Gastrocnemius medialis (tissue), 4 donors: ENCODE measurements at regions of chr9 and their contacts with region 1.

Region 1: DNA sequence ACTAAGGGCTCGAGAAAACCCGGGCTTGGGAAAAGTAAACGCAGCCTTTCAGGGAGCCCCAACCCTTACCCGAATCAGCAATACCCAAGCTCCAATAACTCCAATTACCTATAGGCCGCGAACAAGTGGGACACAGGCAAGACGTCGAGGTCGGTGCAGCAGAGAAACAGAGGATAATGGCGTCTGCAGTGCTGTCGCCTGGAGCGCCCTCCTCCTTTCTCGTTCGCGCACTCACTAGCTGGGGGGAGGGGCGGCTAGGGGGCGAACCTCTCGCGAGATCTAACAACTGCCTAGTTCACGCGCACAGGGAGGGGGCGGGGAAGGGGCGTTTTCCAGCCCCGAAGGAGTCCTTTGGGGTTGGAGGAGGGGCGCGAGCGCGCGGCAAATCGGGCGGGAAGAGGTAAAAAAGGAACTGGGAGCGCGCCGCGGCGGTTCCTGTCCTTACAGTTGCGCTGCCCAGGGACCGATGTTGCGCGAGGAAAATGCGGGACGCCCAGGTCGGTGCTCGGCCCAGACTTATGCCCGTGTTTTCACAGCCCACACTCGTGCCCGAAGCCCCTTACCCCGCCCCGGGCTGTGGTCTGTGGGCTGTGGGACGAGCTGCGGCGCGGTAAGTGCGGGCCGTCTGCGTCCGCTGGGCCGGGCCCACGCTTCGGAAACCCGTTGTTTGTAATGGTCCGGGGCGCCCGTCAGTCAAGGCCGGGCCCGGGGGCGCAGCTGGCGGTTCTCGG is at the start of gene RMI1:
- DNase-seq: peak; percentile 99
- ATAC-seq: peak; percentile 87 to 88
- H3K4me3 ChIP-seq: peak within 1 kb of the TSS; percentile 88 to 97 (median 92)
- H3K27ac ChIP-seq: peak within 1 kb of the TSS; percentile 99
- H3K4me1 ChIP-seq: peaks cover 31 to 37% of the 10 kb centered on the region in 2 donors
- H3K27me3 ChIP-seq: no peaks in the 10 kb centered on the region
- CTCF ChIP-seq: peak in 1 of 5 experiments; percentile 38
- POLR2A ChIP-seq: peak; percentile 94 to 98
- total RNA-seq, gene RMI1: 2.8 to 3.9 (median 3.6) TPM

Region 2: DNA sequence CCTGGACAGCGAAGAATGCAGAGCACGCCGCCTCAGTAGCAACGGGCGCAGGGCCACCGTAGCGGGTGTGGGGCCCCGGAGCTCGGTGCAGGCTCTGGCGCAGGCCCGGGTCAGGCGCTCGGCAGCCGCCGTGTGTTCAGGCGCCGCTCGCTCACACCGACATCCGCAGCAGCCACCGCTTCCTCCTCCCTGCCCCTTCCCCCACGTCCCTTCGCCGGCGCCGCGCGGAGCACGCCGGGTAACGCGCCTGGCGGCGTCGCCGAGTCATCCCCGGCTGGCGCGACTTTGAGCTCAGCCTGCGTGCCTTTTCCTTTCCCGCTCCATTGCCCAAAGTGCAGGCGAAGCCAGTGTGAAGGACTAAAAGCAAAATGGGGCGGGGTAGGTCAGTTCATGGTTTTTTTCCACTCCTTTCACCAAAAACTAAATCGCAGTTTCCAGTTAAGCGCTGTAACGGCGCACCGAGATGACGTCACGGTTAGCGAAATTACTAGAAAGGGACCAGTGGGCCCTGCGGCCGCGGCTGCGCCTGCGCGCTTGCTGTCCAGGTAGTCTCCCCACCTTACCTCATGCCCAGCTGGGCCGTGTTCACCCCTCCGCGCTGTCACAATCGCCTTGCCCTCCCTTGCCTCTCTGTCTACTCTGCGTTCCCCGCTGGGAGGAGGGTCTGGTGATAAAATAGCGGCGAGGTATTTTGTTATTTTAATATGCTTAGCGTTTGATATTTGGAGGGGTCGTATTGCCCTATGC is 272.6 kb before region 1 on chr9 and contains the start of gene UBQLN1:
- in situ Hi-C with region 1: no loop called
- intact Hi-C with region 1: loop called (anchors 1 kb)
- DNase-seq: peak; percentile 87 to 94
- ATAC-seq: peak; percentile 82
- H3K4me3 ChIP-seq: peak within 1 kb of the TSS; percentile 70 to 92 (median 82)
- H3K27ac ChIP-seq: peak within 1 kb of the TSS; percentile 96 to 99 (median 98)
- H3K4me1 ChIP-seq: peaks cover 25 to 40% of the 10 kb centered on the region in 2 donors
- H3K27me3 ChIP-seq: no peaks in the 10 kb centered on the region
- CTCF ChIP-seq: no peak
- POLR2A ChIP-seq: peak; percentile 98
- total RNA-seq, gene UBQLN1: 202 to 266 (median 231) TPM

Region 3: GRCh38 chr9:83920927-83921707 is 59.4 kb before region 1 on chr9 and contains the start of gene KIF27:
- in situ Hi-C with region 1: no loop called
- intact Hi-C with region 1: loop called (anchors 1 kb)
- DNase-seq: peak; percentile 96 to 98
- ATAC-seq: peak; percentile 95
- H3K4me3 ChIP-seq: peak within 1 kb of the TSS; percentile 70 to 87 (median 80)
- H3K27ac ChIP-seq: peak within 1 kb of the TSS; percentile 91 to 95 (median 94)
- H3K4me1 ChIP-seq: peaks cover 4 to 10% of the 10 kb centered on the region in 2 donors
- H3K27me3 ChIP-seq: no peaks in the 10 kb centered on the region
- CTCF ChIP-seq: peak; percentile 44 to 62 (median 52)
- POLR2A ChIP-seq: peak; percentile 85 to 88
- total RNA-seq, gene KIF27: 1.7 to 4.1 (median 2.2) TPM

Region 4: GRCh38 chr9:83937911-83938323 is 42.6 kb before region 1 on chr9:
- in situ Hi-C with region 1: no loop called
- intact Hi-C with region 1: no loop called
- DNase-seq: no peak
- ATAC-seq: peak; percentile 45 to 48
- H3K4me3 ChIP-seq: no peak overlapping the region
- H3K27ac ChIP-seq: no peak overlapping the region
- H3K4me1 ChIP-seq: peaks cover 20 to 29% of the 10 kb centered on the region in 2 donors
- H3K27me3 ChIP-seq: no peaks in the 10 kb centered on the region
- CTCF ChIP-seq: peak; percentile 59 to 71 (median 68)
- POLR2A ChIP-seq: no peak

Region 5: DNA sequence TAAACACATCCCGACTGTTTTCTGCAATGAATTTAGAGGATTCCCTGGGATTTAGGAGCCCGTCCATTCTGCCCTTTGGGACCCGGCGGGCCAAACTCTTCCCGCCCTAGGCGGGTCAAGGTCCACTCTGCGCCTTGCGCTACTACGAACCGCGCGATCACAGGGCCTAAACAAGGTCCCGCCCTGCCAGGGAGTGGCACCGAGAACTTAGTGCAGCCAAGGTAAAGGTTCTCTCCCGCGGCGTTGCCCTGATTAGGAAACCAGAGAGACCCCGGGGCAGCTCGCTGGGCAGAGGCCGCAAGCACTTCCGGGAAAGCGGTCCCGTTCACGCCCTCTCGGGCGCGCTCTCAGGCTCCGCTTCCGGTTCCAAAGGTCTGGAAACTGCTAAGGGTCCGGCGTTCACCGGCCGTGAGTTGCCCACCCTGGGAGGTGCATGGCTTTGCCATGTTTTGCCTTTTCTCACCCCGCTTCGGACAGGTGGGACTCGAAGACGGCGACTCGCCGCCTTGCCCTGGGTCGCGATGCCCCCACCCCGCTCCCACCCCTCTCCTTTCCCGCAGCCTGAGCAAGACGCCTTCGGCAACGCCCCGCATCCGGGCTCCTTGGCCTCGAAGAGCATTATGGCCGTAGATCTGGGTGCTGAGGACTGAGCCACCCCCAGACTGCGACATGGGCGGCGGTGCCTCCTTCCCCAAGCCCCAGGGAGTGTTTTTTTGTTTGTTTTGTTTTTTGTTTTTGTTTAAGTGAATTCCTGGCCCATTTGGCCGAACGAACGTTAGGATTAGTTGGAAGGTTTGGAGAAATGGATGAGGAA is 23.9 kb before region 1 on chr9:
- in situ Hi-C with region 1: no loop called
- intact Hi-C with region 1: loop called (anchors 1 kb)
- DNase-seq: peak; percentile 64 to 69
- ATAC-seq: peak; percentile 86 to 89
- H3K4me3 ChIP-seq: peak overlapping the region; percentile 78 to 96 (median 84)
- H3K27ac ChIP-seq: peak overlapping the region; percentile 78 to 92 (median 88)
- H3K4me1 ChIP-seq: peaks cover 11 to 17% of the 10 kb centered on the region in 2 donors
- H3K27me3 ChIP-seq: no peaks in the 10 kb centered on the region
- CTCF ChIP-seq: no peak
- POLR2A ChIP-seq: peak in 1 of 2 donors; percentile 12

Region 6: GRCh38 chr9:84061594-84062193 is 81.1 kb after region 1 on chr9:
- in situ Hi-C with region 1: no loop called
- intact Hi-C with region 1: loop called (anchors 5 kb)
- DNase-seq: no peak
- ATAC-seq: no peak
- H3K4me3 ChIP-seq: no peak overlapping the region
- H3K27ac ChIP-seq: peak overlapping the region; percentile 41 to 69 (median 61)
- H3K4me1 ChIP-seq: peaks cover 28 to 34% of the 10 kb centered on the region in 2 donors
- H3K27me3 ChIP-seq: no peaks in the 10 kb centered on the region
- CTCF ChIP-seq: no peak
- POLR2A ChIP-seq: no peak

Region 7: DNA sequence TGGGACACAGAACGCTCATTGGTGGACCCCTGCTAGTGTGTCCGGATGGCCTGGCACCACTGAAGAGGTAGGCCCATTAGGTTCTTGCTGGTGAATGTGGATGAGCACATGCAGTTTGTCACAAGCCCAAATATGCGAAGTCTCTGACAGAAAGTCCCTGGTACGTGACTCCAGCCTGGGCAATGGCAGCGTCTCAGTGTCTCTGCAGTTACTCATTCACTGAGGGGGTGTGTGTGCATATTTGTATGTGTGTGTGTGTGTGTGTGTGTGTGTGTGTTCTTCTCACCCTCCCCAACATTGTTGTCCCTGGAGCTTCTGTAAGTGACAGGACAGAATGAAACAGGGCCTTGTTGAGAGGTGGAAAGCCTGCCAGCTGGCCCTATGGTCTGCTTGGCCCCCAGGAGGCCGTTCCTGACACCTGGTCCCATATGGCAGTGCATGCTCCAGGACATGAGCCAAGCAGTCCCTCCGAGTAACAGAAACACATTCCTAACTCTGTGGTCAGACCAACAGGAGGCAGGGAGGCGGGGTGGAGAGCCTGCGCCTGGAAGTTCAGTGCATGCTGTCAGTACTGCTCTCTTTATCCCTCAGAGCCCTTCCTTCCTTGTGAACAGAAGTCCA is 190.1 kb after region 1 on chr9:
- in situ Hi-C with region 1: no loop called
- intact Hi-C with region 1: loop called (anchors 1 kb)
- DNase-seq: peak; percentile 82 to 90
- ATAC-seq: peak; percentile 77 to 78
- H3K4me3 ChIP-seq: no peak overlapping the region
- H3K27ac ChIP-seq: peak overlapping the region; percentile 65 to 75 (median 68)
- H3K4me1 ChIP-seq: peaks cover 18 to 20% of the 10 kb centered on the region in 2 donors
- H3K27me3 ChIP-seq: no peaks in the 10 kb centered on the region
- CTCF ChIP-seq: peak in 2 of 5 experiments; percentile 7 to 25
- POLR2A ChIP-seq: no peak

Region 8: DNA sequence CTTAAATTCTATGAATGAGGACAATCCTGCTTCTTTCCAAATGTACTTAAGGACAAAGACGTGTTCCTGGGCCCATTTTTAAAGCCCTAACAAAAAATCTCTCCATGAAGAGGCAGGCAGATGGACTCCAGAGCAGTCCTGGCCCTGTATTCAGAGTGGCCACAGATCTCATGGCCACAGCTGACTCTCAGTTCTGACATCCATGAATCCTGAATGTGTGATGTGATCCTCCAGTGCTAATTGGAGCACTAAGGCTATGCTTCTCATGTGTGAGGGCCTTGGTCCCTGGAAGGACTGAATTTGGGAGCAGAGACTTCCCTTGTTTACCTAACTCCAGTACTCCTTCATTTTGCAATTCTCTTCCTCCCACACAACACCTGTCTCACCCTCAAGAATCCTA is 1388.2 kb after region 1 on chr9:
- in situ Hi-C with region 1: no loop called
- intact Hi-C with region 1: no loop called
- DNase-seq: no peak
- ATAC-seq: no peak
- H3K4me3 ChIP-seq: no peak overlapping the region
- H3K27ac ChIP-seq: no peak overlapping the region
- H3K4me1 ChIP-seq: no peaks in the 10 kb centered on the region
- H3K27me3 ChIP-seq: no peaks in the 10 kb centered on the region
- CTCF ChIP-seq: no peak
- POLR2A ChIP-seq: no peak

Region 9: DNA sequence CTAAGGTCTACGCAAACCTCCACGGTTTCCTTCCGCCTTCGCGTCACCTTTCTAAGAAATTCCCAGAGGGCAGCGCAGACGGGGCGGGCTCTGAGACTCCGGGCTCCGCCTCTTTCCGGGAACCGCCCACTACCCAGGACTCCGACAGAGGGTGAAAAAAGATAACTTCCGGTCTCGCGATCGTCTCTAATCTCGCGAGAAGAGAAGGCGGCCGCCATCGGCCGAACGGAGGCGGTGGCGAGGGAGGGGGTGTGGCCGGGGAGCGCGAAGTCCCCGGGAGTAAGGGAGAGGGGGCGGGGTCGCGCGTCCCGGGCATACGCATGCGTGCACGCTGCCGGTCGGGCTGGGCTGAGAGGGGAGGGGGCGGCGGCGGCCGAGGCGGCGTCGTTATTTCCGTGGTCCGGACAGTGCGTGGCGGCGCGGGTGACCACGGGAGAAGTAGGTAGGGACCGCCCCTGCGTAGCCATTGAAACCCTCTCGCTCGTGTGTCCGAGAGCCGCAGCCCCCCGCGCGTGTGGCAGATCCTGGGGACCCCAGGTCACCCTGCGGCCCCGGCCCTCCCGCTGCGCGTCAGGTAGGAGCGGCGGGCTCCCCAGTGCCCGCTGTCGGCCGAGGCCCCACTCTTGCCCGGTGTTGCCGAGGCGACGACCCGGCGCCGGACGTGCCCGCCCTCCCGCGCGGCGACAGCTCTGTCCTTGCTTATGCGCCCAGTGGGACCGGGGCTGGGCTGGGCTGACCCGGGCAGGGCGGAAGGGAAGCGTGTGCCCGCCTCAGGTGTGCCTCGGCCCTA is 1960.5 kb after region 1 on chr9 and contains the start of gene NAA35:
- in situ Hi-C with region 1: no loop called
- intact Hi-C with region 1: loop called (anchors 10 kb)
- DNase-seq: peak; percentile 97 to 98
- ATAC-seq: peak; percentile 93 to 94
- H3K4me3 ChIP-seq: peak within 1 kb of the TSS; percentile 92 to 97 (median 94)
- H3K27ac ChIP-seq: peak within 1 kb of the TSS; percentile 92 to 98 (median 97)
- H3K4me1 ChIP-seq: peaks cover 34 to 42% of the 10 kb centered on the region in 2 donors
- H3K27me3 ChIP-seq: no peaks in the 10 kb centered on the region
- CTCF ChIP-seq: no peak
- POLR2A ChIP-seq: peak; percentile 60 to 67
- total RNA-seq, gene NAA35: 22.7 to 26.9 (median 24.5) TPM